HEK293 (cell line): ENCODE measurements at regions of chr6 and their contacts with region 1.

Region 1: DNA sequence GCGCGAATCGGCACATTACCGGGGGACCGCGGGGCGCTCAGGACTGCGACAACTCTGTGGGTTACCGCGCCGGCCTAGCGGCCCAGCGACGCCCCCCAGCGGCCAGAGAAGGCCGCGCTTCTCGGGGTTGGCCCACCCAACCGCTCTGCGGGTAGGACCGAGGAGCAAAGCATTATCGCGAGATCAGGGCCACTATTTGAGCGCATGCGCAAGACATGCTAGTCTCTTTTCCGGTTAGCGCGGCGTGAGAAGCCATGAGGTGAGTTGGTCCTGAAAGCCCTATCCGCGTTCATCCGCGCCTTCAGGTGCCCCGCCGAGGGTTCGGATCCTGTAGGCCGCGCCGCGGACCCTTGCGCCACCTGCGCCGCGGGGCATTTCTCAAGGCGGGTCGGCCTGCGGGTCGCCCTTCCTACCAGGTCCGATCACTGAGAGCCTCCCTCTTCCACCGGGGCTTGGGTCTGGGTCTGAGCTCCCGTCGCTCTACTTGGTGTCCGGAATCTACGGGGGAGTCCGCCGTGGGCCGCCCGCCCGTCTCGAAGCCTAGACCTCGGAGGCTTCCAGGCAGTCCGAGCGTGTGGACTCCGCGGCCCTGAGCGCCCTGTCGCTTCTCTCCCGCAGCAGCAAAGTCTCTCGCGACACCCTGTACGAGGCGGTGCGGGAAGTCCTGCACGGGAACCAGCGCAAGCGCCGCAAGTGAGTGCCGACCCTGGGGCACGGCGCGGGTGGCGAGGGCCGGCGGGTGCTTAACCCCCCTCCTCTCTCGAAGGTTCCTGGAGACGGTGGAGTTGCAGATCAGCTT is at the start of gene RPL10A:
- H3K4me3 ChIP-seq: peak within 1 kb of the TSS; percentile 80
- H3K27ac ChIP-seq: peak within 1 kb of the TSS; percentile 100
- H3K4me1 ChIP-seq: 0 out of 2 replicates have a peak, but pooled peaks cover 5% of the 10 kb centered on the region
- CTCF ChIP-seq: peak; percentile 99

Region 2: GRCh38 chr6:35342258-35343091 is 125.9 kb before region 1 on chr6 and contains the start of gene PPARD:
- CTCF ChIA-PET with region 1: interaction called, 49 read pairs
- POLR2A ChIA-PET with region 1: interaction called, 10 read pairs
- H3K4me3 ChIP-seq: peak within 1 kb of the TSS; percentile 65
- H3K27ac ChIP-seq: no peak within 1 kb of the TSS; the same call in 1 of the 2 replicates
- H3K4me1 ChIP-seq: no peaks in the 10 kb centered on the region; the same call in 1 of the 2 replicates
- CTCF ChIP-seq: peak; percentile 97

Region 3: DNA sequence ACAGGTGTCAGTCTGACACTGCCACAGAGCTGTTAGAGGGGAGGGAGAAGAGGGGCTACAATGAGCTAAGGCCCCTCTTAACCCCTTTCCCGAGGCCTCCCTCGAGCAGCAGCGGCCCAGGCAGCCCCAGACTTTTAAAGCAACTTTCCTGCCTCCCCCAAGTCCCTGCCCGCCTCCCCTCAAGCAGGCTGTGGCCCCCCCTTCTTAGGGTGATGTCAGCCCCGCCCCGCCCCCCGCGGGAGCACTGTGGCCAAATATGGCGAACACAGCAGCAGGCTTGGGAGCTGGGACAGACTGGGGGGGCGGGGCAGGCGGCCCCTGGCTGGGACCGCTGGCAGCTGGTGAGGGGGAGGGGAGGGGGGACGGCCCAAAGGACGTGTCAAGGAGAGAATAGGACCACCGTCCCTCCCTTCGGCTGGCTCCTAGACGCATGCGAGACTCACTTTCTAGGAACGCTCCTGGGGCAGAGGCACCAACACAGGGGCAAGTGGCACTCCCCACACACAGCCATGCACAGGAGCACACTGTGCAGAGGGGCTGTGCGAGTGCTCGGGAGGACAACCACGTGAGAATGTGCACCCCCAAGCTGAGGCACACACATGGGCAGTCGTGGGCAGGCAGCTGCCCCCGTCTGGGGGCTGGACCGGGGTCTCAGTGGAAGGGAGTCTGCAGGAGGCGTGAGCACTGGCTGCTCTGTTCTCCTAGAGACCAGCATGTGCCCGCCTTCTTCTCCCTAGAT is 21.8 kb after region 1 on chr6:
- CTCF ChIA-PET with region 1: interaction called, 6 read pairs
- POLR2A ChIA-PET with region 1: interaction called, 198 read pairs
- H3K4me3 ChIP-seq: no peak overlapping the region
- H3K27ac ChIP-seq: no peak overlapping the region; the same call in 1 of the 2 replicates
- H3K4me1 ChIP-seq: peaks cover 21% of the 10 kb centered on the region
- CTCF ChIP-seq: no peak

Region 4: GRCh38 chr6:35496841-35497570 is 28.6 kb after region 1 on chr6 and contains the start of gene TEAD3:
- CTCF ChIA-PET with region 1: interaction called, 4 read pairs
- POLR2A ChIA-PET with region 1: interaction called, 198 read pairs
- H3K4me3 ChIP-seq: peak within 1 kb of the TSS; percentile 73
- H3K27ac ChIP-seq: peak within 1 kb of the TSS; percentile 66; the same call in 1 of the 2 replicates
- H3K4me1 ChIP-seq: peaks cover 8% of the 10 kb centered on the region
- CTCF ChIP-seq: no peak

Region 5: GRCh38 chr6:35634316-35634715 is 165.9 kb after region 1 on chr6:
- CTCF ChIA-PET with region 1: no interaction called
- POLR2A ChIA-PET with region 1: no interaction called
- H3K4me3 ChIP-seq: no peak overlapping the region
- H3K27ac ChIP-seq: no peak overlapping the region
- H3K4me1 ChIP-seq: peaks cover 10% of the 10 kb centered on the region
- CTCF ChIP-seq: no peak